CD8-positive, alpha-beta memory T cell (primary cell): ENCODE measurements at regions of chr5 and their contacts with region 1.

Region 1: DNA sequence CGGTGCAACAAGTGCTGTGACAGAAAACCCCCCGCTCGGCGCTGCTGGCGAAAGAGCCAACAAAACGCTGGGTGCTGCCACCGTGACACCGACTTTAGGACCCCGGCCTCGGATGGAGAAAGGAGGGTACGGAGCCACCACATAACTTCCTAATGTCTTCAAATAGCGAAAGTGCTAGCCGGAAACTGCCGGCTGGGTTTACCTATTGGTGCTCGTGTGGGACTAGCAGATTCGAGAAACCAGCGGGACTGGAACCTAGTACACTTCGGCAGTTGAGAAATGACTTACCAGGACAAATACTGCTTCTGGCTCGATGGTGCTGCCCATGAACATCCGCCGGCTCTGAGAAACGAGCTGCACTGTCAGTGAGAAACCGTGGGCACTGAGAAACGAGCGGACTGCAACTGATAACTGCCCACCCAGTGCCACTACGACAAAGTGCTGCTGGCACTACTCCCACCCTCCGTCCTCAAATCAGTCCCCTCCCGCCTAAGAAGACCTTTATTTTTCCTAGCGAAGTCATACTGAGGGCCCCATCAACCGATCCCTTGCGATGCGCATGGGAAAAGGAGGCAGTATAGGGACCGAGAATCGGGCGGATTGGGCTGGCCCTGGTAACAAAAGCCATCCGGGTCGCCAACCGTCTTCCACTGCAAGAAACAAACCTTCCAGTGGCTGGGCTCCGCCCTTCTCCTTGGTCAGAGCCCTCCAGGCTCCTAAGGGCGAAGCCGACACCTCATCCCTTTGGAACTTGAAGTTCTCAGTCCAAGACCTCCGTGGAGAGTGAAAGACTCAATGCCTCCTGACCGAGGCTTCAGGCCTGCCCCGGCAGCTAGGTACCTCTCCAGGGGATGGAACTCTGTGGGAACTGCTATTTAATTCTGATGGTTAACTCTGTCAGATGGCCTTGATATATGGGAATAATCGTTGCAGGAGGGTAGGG is 27.0 kb upstream of the ANXA2R start:
- DNase-seq: peak; percentile 75 to 92 (median 87)
- H3K4me3 ChIP-seq: peak overlapping the region; percentile 99
- H3K4me3 Mint-ChIP-seq: peak overlapping the region; percentile 91 to 99 (median 98)
- H3K27ac ChIP-seq: peak overlapping the region; percentile 99
- H3K27ac Mint-ChIP-seq: peak overlapping the region; percentile 96 to 100 (median 99)
- H3K4me1 ChIP-seq: peaks cover 31% of the 10 kb centered on the region
- H3K4me1 Mint-ChIP-seq: peaks cover 42 to 59% (median 52%) of the 10 kb centered on the region in 3 donors
- H3K27me3 ChIP-seq: no peaks in the 10 kb centered on the region
- H3K27me3 Mint-ChIP-seq: no peaks in the 10 kb centered on the region

Region 2: DNA sequence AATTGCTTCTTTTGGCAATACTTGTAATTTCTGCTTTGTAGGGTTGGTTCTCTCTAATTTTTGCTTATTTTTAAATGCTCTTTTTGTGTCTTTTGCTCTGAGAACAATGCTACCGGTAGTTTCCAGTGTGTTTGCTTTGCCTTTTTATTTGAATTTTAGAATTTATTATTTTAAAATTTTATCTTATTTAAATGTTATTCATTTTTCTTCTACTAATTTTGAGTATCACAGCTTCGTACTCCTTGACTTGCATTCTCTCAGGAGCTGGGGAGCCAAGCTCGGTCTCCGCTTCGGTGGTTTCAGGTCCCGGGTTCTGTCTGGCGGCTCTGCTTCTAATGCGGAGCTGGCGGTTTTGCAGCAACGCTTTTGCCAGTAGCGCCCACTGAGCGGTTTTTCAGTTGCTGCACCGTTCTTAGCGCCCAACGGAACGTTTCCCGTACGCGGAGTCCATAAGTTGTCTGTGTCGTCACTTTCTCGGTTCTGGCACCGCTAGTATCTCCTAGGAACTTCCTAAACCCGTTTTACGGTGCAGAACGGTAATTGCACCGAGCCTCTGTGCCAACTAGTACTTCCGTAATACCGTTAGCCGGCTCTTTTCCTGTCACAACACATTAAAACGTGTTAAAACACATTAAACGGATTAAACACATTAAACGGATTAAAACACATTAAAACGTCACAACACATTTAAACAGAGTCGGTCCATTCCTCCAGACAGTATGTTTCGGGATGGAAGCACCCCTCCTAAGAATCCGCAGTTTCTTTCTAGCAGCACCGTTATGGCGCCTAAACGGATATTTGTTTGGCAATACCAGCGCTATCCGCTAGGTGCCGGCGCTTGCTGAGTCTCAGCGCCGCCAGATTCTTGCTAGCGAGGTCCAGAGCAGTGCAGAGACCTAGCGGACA is 72.6 kb before region 1 on chr5:
- CTCF ChIA-PET with region 1: interaction called, 76 read pairs
- POLR2A ChIA-PET with region 1: interaction called, 132 read pairs
- DNase-seq: peak; percentile 74 to 91 (median 84)
- H3K4me3 ChIP-seq: peak overlapping the region; percentile 97
- H3K4me3 Mint-ChIP-seq: peak overlapping the region; percentile 94 to 100 (median 99)
- H3K27ac ChIP-seq: peak overlapping the region; percentile 97
- H3K27ac Mint-ChIP-seq: peak overlapping the region; percentile 97 to 100 (median 100)
- H3K4me1 ChIP-seq: peaks cover 29% of the 10 kb centered on the region
- H3K4me1 Mint-ChIP-seq: peaks cover 31 to 35% (median 35%) of the 10 kb centered on the region in 3 donors
- H3K27me3 ChIP-seq: no peaks in the 10 kb centered on the region
- H3K27me3 Mint-ChIP-seq: peaks cover 0 to 13% of the 10 kb centered on the region in 2 donors

Region 3: DNA sequence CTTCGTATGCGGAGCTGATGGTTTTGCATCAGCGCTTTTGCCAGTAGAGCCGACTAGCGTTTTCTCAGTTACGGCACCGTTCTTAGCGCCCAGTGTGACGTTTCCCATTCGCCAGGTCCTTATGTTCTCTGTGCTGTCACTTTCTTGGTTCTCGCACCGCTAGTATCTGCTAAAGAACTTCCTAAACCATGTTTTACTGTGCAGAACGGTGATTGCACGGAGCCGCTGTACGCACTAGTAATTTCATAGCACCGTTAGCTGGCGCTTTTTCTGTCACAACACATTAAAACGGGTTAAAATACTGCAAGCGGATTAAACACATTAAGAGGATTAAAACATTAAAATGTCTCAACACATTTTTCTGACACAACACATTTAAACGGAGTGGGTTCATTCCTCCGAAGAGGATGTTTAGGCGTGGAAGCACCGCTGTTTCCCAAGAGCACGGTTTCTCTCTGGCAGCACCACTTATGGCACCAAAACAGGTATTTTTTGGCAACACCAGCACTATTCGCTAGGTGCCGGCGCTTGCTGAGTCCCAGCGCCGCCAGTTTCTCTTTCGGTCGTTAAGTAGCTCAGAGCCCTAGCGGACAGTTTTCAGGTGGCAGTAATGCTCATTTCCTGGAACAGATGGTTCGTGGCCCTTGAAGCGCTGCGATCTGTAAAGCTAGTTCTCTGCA is 47.3 kb before region 1 on chr5:
- CTCF ChIA-PET with region 1: interaction called, 32 read pairs
- POLR2A ChIA-PET with region 1: interaction called, 142 read pairs
- DNase-seq: peak; percentile 75 to 93 (median 87)
- H3K4me3 ChIP-seq: peak overlapping the region; percentile 87
- H3K4me3 Mint-ChIP-seq: peak overlapping the region; percentile 97 to 100 (median 99)
- H3K27ac ChIP-seq: peak overlapping the region; percentile 96
- H3K27ac Mint-ChIP-seq: peak overlapping the region; percentile 98 to 100 (median 100)
- H3K4me1 ChIP-seq: peaks cover 36% of the 10 kb centered on the region
- H3K4me1 Mint-ChIP-seq: peaks cover 40 to 56% (median 54%) of the 10 kb centered on the region in 3 donors
- H3K27me3 ChIP-seq: no peaks in the 10 kb centered on the region
- H3K27me3 Mint-ChIP-seq: peaks cover 0 to 8% of the 10 kb centered on the region in 2 donors

Region 4: DNA sequence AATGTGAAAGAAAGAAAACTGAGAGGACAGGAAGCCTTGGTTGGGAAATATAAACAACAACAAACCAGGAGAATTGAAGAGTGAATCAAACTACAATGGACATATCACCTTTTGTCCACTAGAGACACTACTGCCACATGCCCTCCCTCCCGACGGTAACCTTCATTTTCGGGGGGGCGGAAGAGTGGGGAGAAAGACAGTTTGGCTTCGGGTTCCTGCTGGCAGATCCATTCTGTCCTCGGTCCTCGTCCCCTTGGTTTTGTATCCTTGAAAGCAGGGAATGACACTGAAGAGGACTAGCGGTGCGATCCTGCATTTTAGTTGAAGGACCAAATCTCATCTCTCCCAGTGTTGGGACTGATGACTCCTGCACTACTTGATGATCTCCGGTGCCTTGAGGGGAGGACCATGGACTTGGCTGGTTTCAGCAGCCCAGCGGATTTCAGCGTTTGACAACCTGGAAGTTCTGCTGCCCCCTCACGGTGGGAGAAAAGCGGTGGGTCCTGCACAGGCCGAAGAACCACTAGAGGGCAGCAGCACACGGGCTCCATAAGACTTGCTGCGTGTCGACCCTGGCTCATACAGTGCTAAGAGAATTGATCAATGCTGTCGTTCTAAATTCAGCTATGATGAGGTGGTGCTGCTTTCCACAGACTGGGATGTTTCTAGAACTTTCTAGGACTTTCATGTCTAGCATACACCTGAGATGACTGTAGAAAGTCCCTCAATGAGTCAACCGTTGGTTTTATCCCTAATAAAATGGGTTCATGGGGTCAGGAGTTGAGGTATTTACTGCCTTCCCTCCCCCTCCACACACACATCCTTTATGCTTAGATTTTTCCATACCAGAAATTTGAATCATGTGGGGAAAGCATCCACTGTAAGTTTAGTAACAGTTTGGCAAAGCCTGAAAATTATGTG is 38.6 kb after region 1 on chr5:
- CTCF ChIA-PET with region 1: interaction called, 10 read pairs
- POLR2A ChIA-PET with region 1: no interaction called
- DNase-seq: peak; percentile 80 to 92 (median 84)
- H3K4me3 ChIP-seq: peak overlapping the region; percentile 74
- H3K4me3 Mint-ChIP-seq: peak overlapping the region; percentile 77 to 91 (median 85)
- H3K27ac ChIP-seq: peak overlapping the region; percentile 19
- H3K27ac Mint-ChIP-seq: peak overlapping the region; percentile 72 to 95 (median 90)
- H3K4me1 ChIP-seq: peaks cover 21% of the 10 kb centered on the region
- H3K4me1 Mint-ChIP-seq: peaks cover 33 to 45% (median 44%) of the 10 kb centered on the region in 3 donors
- H3K27me3 ChIP-seq: no peaks in the 10 kb centered on the region
- H3K27me3 Mint-ChIP-seq: no peaks in the 10 kb centered on the region